WTC11 (cell line): ENCODE measurements at regions of chr14 and their contacts with region 1.

Region 1: GRCh38 chr14:92680781-92681650 is 67.4 kb downstream of the LGMN start:
- DNase-seq: peak; percentile 81
- ATAC-seq: peak; percentile 86
- H3K4me3 Mint-ChIP-seq: no peak overlapping the region
- H3K27ac Mint-ChIP-seq: no peak overlapping the region
- H3K4me1 Mint-ChIP-seq: peaks cover 3% of the 10 kb centered on the region; the same call in 1 of the 2 replicates
- H3K27me3 Mint-ChIP-seq: no peaks in the 10 kb centered on the region
- CTCF ChIP-seq: peak; percentile 96

Region 2: DNA sequence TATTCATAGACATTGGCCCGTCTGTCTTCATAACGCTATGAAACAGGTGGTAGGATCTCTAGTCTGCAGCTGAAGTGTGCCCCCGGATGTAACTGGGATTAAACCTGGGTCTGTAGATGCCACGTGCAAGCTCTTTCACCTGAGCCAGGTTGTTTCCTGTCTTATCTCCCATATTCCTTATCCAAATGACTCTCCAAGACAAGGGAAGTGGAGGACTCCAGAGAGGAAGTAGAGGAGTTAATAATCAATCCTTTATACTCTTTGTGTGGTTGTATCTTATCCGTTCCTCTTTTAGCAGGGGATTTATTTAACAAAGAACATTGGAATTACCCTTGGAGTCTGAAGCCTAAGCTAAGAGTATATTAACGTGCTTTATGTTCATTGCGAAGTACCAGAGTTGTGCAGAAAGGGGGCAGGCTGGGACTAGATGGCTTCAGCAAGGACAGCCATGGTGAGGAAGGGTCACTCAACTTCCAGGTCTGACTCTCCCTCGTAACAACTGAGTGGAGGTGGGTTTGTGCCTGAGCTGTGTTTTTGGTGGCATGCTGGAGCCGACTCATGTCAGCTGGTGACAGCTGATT is 84.6 kb before region 1 on chr14:
- CTCF ChIA-PET with region 1: interaction called, 10 read pairs
- POLR2A ChIA-PET with region 1: no interaction called
- DNase-seq: no peak
- ATAC-seq: peak; percentile 84
- H3K4me3 Mint-ChIP-seq: no peak overlapping the region
- H3K27ac Mint-ChIP-seq: no peak overlapping the region
- H3K4me1 Mint-ChIP-seq: 0 out of 2 replicates have a peak, but pooled peaks cover 3% of the 10 kb centered on the region
- H3K27me3 Mint-ChIP-seq: peaks cover 2% of the 10 kb centered on the region; the same call in 1 of the 2 replicates
- CTCF ChIP-seq: no peak